Activated naive CD4-positive, alpha-beta T cell treated with anti-CD3 and anti-CD28 coated beads, Interleukin-2, amount 10 ng/mL, durations not matched to agents 7 days and 5 days (primary cell): ENCODE measurements at regions of chr10 and their contacts with region 1.

Region 1: GRCh38 chr10:71569775-71570588 is 149.6 kb downstream of the C10orf105 start:
- DNase-seq: peak; percentile 86
- H3K4me3 Mint-ChIP-seq: no peak overlapping the region
- H3K27ac Mint-ChIP-seq: no peak overlapping the region
- H3K4me1 Mint-ChIP-seq: peaks cover 3% of the 10 kb centered on the region
- H3K27me3 Mint-ChIP-seq: peaks cover 4% of the 10 kb centered on the region

Region 2: DNA sequence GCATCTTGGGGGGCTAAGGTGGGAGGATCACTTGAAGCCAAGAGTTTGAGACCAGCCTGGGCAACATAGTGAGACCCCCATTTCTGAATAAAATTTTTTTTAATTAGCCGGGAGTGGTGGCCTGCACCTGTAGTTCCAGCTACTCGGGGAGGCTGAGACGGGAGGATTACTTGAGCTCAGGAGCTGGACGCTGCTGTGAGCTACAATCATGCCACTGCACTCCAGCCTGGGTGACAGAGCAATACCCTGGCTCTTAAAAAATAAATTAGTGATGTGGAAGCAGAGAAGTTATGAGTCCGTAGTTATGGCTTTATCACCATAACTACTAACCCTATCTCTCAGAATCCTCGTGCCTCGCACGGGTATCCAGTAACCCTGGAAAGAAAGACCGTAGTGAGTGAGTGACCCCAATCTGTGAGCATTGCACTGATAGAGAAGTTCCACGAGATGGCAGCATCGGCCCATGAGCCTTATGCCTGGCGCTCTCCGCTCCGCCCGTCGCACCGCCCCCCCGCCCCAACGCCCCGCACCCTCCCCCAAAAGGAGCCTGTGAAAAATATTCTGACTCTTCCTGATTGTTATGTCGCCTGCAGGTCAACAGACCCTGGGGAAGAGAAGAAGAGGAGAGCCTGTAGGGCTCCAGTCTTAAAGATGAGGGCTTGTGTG is 255.8 kb before region 1 on chr10:
- CTCF ChIA-PET with region 1: interaction called, 60 read pairs
- DNase-seq: peak; percentile 73
- H3K4me3 Mint-ChIP-seq: no peak overlapping the region
- H3K27ac Mint-ChIP-seq: no peak overlapping the region
- H3K4me1 Mint-ChIP-seq: peaks cover 27% of the 10 kb centered on the region
- H3K27me3 Mint-ChIP-seq: peaks cover 43% of the 10 kb centered on the region

Region 3: DNA sequence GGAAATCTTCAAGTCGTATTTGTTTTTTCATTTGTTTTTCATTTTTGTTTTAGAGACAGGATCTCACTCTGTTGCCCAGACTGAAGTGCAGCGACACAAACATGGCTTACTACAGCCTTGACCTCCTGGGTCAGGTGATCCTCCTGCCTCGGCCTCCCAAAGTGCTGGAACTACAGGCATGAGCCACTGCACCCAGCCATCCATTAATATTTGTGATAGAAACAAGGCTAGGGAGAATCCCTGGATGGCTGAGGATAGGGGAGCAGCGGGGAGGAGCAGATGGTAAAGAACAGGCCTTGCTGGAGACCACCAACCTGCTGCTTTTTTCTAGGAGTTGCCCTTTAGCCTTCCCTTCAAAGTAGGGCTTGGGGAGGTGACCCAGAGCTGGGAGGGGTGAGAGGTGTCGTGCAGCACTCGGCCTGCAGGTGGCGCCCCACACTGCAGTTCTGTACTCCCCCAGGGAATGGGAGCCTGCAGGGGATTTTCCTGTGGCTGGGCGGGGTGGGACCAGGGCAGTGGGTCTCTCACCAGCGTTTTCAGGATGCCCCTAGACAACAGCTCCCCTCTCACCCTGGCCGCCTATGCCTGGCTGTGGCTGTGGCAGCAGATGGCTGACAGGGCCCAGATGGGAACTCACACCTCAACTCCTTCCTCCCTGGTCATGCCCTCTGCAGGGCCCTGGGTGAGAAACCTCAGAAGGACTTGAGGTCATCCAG is 185.9 kb before region 1 on chr10:
- CTCF ChIA-PET with region 1: interaction called, 50 read pairs
- DNase-seq: peak; percentile 81
- H3K4me3 Mint-ChIP-seq: no peak overlapping the region
- H3K27ac Mint-ChIP-seq: no peak overlapping the region
- H3K4me1 Mint-ChIP-seq: no peaks in the 10 kb centered on the region
- H3K27me3 Mint-ChIP-seq: peaks cover 21% of the 10 kb centered on the region

Region 4: DNA sequence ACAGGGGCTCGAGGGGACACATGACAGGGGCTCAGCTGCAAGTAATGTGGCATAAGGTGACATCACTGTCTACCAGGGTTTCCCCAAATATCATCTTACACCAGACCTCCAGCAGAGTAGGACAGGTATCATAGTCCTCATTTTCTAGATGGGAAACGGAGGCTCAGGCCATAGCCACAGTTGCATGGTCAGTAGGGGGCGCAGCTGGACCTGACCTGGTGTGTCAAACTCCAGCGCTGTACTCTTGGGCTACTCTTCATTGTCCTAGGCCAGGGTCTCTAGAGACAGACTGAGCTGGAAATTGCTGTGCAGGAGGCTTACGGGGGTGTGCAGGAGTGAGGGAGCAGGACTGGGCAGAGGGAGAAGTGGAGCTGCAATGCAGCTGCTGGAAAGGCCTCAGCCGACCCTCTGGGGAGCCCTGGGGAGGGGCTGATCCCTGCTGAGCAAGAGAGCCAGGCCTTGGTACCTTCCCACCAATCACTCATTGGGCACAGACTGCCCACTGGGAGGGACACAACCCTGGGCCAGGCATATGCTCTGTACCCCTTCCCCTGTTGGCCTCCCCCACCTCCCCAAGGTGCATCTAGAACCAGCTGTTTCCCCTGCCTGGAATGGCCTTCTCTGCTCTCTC is 83.4 kb before region 1 on chr10:
- CTCF ChIA-PET with region 1: interaction called, 11 read pairs
- DNase-seq: peak; percentile 60
- H3K4me3 Mint-ChIP-seq: no peak overlapping the region
- H3K27ac Mint-ChIP-seq: no peak overlapping the region
- H3K4me1 Mint-ChIP-seq: no peaks in the 10 kb centered on the region
- H3K27me3 Mint-ChIP-seq: peaks cover 8% of the 10 kb centered on the region

Region 5: GRCh38 chr10:71547876-71548846 is 21.8 kb before region 1 on chr10:
- CTCF ChIA-PET with region 1: interaction called, 12 read pairs
- DNase-seq: peak; percentile 55
- H3K4me3 Mint-ChIP-seq: no peak overlapping the region
- H3K27ac Mint-ChIP-seq: no peak overlapping the region
- H3K4me1 Mint-ChIP-seq: no peaks in the 10 kb centered on the region
- H3K27me3 Mint-ChIP-seq: peaks cover 6% of the 10 kb centered on the region

Region 6: GRCh38 chr10:71725998-71726579 is 156.1 kb after region 1 on chr10:
- CTCF ChIA-PET with region 1: no interaction called
- DNase-seq: peak; percentile 70
- H3K4me3 Mint-ChIP-seq: peak overlapping the region; percentile 36
- H3K27ac Mint-ChIP-seq: peak overlapping the region; percentile 99
- H3K4me1 Mint-ChIP-seq: peaks cover 77% of the 10 kb centered on the region
- H3K27me3 Mint-ChIP-seq: peaks cover 9% of the 10 kb centered on the region